Esophagus muscularis mucosa (tissue), 4 donors: ENCODE measurements at regions of chr2 and their contacts with region 1.

Region 1: DNA sequence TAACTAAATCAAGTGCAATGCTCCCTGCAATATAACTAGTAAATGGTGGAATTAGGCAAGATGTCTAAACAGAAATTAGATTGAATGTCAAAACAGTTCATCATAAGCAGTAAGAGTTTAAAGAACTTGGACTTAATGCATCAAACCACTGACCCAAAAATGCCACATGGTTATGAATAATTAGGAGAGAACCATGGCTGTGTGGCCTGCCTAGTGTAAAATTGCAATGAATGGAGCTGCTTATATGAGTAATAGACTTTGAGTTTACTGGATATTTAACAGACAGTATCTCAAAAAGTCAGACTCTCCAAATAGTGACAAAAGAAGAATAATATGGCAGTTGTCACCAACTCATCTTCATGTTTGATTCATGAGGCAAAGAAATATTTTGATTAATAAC is 101.6 kb upstream of the COL5A2 start:
- DNase-seq: no peak
- H3K4me3 ChIP-seq: no peak overlapping the region
- H3K27ac ChIP-seq: no peak overlapping the region
- H3K4me1 ChIP-seq: peaks cover 0 to 26% (median 18%) of the 10 kb centered on the region in 4 donors
- H3K27me3 ChIP-seq: no peaks in the 10 kb centered on the region
- CTCF ChIP-seq: no peak
- EP300 ChIP-seq: no peak
- POLR2A ChIP-seq: no peak

Region 2: DNA sequence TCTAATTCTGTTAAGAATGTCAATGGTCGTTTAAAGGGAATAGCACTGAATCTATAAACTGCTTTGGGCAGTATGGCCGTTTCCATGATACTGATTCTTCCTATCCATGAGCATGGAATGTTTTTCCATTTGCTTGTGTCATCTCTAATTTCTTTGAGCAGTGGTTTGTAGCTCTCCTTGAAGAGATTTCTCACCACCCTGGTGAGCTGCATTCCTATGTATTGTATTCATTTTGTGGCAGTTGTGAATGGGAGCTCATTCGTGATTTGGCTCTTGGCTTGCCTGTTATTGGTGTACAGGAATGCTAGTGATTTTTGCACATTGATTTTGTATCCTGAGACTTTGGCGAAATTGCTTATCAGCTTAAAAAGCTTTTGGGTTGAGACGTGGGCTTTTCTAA is 121.7 kb after region 1 on chr2:
- intact Hi-C with region 1: loop called (anchors 5 kb)
- DNase-seq: no peak
- H3K4me3 ChIP-seq: no peak overlapping the region
- H3K27ac ChIP-seq: no peak overlapping the region
- H3K4me1 ChIP-seq: peaks cover 0 to 18% (median 16%) of the 10 kb centered on the region in 4 donors
- H3K27me3 ChIP-seq: no peaks in the 10 kb centered on the region
- CTCF ChIP-seq: no peak
- EP300 ChIP-seq: no peak
- POLR2A ChIP-seq: no peak